GM10248 (cell line): ENCODE measurements at regions of chr9 and their contacts with region 1.

Region 1: GRCh38 chr9:137590462-137591383 is at the start of gene ZMYND19:
- DNase-seq: peak; percentile 100
- CTCF ChIP-seq: no peak

Region 2: DNA sequence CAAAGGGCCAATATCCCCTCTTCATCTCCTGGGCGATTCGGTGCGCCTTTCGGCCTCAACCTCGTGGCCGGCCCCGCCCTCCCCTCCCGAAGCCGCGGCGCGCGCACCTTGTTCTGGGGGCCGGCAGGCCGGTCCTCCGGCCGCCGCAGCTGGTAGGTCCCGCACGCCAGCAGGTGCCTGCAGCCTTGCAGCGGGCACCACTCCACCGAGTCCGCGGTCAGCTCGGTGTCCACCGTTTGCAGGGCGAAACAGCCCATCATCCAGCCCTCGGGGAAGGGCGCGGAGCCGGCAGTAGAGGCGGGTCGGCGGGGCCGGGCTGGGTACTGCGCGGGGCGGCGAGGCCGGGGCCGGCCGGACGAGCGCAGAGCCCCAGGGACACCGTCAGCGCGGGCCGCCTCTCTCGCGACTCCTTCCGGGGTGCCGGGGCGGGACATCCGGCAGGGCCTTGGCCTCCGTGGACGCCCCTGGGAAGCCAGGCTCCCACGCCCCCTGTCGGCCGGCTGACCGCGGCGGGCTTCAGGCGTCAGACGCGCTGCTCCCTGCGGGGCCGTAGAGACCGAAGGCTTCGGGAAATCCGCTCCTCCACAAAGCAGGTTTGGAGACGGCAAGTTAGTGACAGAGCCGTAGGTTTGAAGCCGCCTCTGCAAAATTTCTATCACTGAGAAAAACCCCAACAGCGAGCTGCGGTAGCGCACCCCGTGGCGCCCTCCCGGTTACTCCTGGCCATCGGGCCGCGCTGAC is 12.0 kb before region 1 on chr9 and contains the start of gene DPH7:
- CTCF ChIA-PET with region 1: interaction called, 74 read pairs
- POLR2A ChIA-PET with region 1: interaction called, 4 read pairs
- DNase-seq: peak; percentile 99
- CTCF ChIP-seq: peak; percentile 98

Region 3: DNA sequence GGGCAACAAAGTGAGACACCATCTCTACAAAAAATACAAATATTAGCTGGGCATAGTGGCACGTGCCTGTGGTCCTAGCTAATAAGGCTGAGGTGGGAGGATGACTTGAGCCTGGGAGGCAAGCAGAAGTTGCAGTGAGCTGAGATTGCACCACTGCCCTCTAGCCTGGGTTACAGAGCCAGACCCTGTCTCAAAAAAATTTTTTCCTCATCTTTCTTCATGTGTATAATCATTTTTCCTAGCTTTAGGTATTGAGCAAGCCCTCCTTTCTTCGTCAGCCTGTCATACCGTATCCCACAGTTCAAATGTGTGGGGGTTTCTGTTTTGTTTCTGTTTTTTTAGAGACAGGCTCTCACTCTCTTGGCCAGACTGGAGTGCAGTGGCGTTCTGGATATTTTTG is 69.4 kb after region 1 on chr9:
- CTCF ChIA-PET with region 1: no interaction called
- POLR2A ChIA-PET with region 1: no interaction called
- DNase-seq: no peak
- CTCF ChIP-seq: no peak